HepG2 (cell line): ENCODE measurements at regions of chr21 and their contacts with region 1.

Region 1: GRCh38 chr21:39125752-39126485 is 57.3 kb downstream of the PSMG1 start:
- DNase-seq: peak; percentile 80
- ATAC-seq: peak; percentile 99
- H3K4me3 ChIP-seq: no peak overlapping the region
- H3K27ac ChIP-seq: no peak overlapping the region
- H3K4me1 ChIP-seq: peaks cover 33% of the 10 kb centered on the region
- H3K27me3 ChIP-seq: no peaks in the 10 kb centered on the region
- CTCF ChIP-seq: peak; percentile 92
- EP300 ChIP-seq: peak in 1 of 2 experiments; percentile 31; a peak in 1 of 4 replicates
- POLR2A ChIP-seq: no peak
- RAD21 ChIP-seq: peak; percentile 79

Region 2: GRCh38 chr21:39088831-39089380 is 37.0 kb before region 1 on chr21:
- CTCF ChIA-PET with region 1: interaction called, 4 read pairs
- POLR2A ChIA-PET with region 1: no interaction called
- in situ Hi-C with region 1: no loop called
- intact Hi-C with region 1: loop called (anchors 1 kb)
- DNase-seq: peak; percentile 50
- ATAC-seq: peak; percentile 71
- H3K4me3 ChIP-seq: no peak overlapping the region
- H3K27ac ChIP-seq: no peak overlapping the region
- H3K4me1 ChIP-seq: peaks cover 73% of the 10 kb centered on the region
- H3K27me3 ChIP-seq: no peaks in the 10 kb centered on the region
- CTCF ChIP-seq: peak; percentile 80
- EP300 ChIP-seq: no peak
- POLR2A ChIP-seq: no peak
- RAD21 ChIP-seq: peak; percentile 55

Region 3: DNA sequence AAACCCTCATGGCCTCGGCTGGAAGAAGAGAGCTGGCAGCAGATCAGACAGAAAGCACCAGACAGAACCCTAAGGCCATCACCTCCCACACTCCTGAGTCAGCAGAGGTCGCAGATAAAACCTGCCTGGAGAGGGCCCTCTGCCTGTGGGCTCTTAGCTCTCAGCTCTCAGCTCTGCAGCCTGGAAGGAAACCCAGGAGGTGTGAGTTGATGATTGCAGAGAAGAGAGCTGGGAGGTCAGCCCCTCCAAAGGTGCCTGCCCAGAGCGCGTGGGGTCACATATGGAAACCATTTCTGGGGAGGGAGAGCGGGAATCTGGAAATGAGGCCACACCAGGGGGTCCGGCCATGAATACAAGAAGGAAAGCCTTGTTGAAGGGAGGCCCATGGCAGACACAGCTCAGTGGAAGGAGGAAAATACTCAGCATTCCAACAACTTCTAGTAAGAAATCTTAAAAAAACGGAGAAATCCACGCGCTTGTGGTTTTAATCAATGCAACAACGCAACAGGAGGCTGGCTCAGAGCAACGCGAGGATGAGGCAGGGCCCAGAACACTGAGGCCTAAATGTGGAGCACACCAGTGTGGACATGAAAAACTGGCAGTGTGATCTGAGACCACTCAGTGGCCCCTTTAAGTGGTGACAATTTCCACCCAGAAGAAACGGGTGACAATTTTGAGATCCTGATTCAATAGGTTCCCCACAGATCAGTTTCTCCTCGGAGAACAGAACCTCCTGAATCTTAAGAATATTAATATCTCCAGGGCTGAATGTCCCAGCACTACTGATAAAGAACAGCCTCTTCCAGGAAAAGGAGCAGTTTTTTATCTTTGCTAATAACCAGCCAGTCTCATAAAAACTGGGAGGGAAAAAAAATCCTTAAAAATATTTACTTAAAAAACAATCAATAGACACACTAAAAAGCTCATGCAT is 11.6 kb after region 1 on chr21:
- CTCF ChIA-PET with region 1: no interaction called
- POLR2A ChIA-PET with region 1: no interaction called
- in situ Hi-C with region 1: no loop called
- intact Hi-C with region 1: no loop called
- DNase-seq: peak; percentile 43
- ATAC-seq: peak; percentile 67
- H3K4me3 ChIP-seq: no peak overlapping the region
- H3K27ac ChIP-seq: no peak overlapping the region
- H3K4me1 ChIP-seq: peaks cover 51% of the 10 kb centered on the region
- H3K27me3 ChIP-seq: peaks cover 0 to 16% of the 10 kb centered on the region in 2 experiments; a peak in 1 of 5 replicates
- CTCF ChIP-seq: peak; percentile 47
- EP300 ChIP-seq: no peak
- POLR2A ChIP-seq: no peak
- RAD21 ChIP-seq: no peak